ENCODE measurements at regions of chr6 and their contacts with region 1.

Region 1: DNA sequence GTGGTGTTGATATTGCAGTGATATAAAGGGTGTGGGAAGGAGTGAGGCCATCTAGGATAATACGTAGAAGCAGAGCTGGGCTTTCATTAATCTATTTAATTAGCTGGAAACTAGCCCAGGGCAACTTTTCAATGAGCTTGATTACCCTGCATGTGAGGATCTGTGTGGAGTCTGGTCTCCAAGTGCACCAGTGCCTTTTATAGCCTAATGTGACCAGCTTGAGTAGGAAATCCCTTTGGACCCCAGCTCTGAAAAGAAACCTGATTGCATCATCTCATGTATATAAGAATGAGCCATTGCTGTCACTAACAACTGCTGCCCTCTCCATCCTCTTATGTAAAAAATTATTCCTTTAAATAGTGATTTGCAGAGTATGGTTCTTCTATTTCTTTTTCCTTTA is 72.6 kb downstream of the CD109 start:
- DNase-seq: no peak
- ATAC-seq: no peak
- H3K4me3 ChIP-seq: no peak overlapping the region
- H3K27ac ChIP-seq: no peak overlapping the region
- H3K4me1 ChIP-seq: no peaks in the 10 kb centered on the region
- H3K27me3 ChIP-seq: no peaks in the 10 kb centered on the region
- CTCF ChIP-seq: no peak

Region 2: DNA sequence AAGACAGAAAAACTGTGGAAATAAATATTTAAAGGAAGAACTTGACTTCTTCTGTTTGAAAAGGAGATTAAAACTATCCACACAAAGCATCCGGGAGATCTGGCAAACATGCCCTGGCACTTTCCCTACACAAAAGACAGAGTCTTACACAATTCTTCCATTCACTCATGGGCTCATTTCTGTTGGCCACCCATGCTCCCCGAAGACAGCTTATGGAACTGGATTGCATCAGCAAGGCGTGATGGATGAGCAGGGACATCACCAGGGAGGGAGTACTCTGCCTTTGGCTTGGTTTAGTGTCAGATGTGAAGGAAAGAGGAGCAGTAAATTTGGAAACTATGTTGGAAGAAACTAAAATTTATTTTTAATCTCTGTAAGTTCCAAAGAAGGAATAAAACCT is 306.8 kb after region 1 on chr6:
- intact Hi-C with region 1: loop called in 1 of 10 experiments (anchors 10 kb)
- DNase-seq: peak; percentile 11 to 32
- ATAC-seq: peak in 7 of 8 donors; percentile 65 to 90 (median 78)
- H3K4me3 ChIP-seq: no peak overlapping the region
- H3K27ac ChIP-seq: peak overlapping the region in 5 of 10 donors; percentile 12 to 66 (median 39)
- H3K4me1 ChIP-seq: peaks cover 0 to 5% (median 0%) of the 10 kb centered on the region in 9 donors
- H3K27me3 ChIP-seq: no peaks in the 10 kb centered on the region
- CTCF ChIP-seq: no peak

Measured in heart right ventricle (tissue), 16 donors.